ENCODE measurements at regions of chr1 and their contacts with region 1.

Region 1: DNA sequence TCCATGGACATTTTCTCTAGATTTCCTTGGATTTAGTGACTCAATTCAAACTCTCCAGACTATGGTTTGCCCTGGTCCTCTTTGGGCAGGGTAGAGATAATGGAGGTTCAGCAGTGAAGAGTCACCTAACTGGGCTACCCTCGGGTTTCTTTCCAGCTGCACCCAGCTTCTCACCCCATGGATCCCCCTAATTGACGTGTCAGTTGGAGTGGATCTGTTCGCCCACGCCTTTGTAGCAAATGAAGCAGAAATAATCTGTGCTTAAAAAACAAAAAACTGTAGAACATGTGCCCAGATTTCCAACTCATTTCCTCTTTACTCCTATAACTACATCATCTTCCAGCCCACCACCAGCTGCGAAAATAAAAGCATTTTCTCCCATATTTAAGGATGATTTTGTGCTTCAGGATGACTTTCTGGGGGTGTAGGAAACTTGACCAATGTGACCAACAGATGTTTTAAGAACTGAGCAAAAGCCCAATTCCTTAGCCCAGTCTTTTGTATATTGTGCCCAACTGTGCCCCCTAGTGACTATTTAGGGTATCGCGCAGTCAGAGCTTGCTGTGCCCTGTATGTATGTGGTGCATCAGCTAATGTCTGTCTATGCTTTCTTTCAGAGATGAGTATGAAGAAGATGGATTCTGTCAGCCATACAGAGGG is 66.5 kb upstream of the UBE2U start:
- ATAC-seq: peak; percentile 88 to 98 (median 92)
- H3K4me3 ChIP-seq: no peak overlapping the region
- H3K27ac ChIP-seq: no peak overlapping the region
- H3K4me1 ChIP-seq: no peaks in the 10 kb centered on the region

Region 2: GRCh38 chr1:63691701-63692425 is 445.0 kb before region 1 on chr1:
- in situ Hi-C with region 1: loop called in 5 of 9 experiments (anchors 25 kb)
- ATAC-seq: peak; percentile 88 to 97 (median 90)
- H3K4me3 ChIP-seq: no peak overlapping the region
- H3K27ac ChIP-seq: peak overlapping the region in 1 of 2 donors; percentile 38
- H3K4me1 ChIP-seq: peaks cover 0 to 12% of the 10 kb centered on the region in 2 donors

Region 3: DNA sequence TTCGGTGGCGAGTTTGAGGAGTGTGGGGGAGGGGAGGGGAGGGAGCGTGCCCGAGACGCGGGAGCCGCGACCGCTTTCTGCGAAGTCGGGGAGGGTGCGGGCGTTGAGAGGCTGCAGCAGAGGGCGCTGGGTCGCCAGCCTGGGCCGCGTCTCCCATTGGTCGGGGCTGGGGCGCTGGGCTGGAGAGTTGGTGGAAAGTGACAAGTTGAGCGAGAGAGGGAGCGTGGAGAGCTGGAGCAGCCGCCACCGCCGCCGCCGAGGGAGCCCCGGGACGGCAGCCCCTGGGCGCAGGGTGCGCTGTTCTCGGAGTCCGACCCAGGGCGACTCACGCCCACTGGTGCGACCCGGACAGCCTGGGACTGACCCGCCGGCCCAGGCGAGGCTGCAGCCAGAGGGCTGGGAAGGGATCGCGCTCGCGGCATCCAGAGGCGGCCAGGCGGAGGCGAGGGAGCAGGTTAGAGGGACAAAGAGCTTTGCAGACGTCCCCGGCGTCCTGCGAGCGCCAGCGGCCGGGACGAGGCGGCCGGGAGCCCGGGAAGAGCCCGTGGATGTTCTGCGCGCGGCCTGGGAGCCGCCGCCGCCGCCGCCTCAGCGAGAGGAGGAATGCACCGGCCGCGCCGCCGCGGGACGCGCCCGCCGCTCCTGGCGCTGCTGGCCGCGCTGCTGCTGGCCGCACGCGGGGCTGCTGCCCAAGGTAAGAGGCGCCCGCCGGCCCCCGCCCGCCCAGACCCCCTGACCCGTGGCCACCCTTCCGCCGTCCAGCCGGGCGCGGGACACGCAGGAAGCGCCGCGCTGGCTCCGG is 362.9 kb before region 1 on chr1 and contains the start of gene ROR1:
- in situ Hi-C with region 1: loop called in 2 of 9 experiments (anchors 10 to 25 kb)
- ATAC-seq: peak; percentile 89 to 98 (median 98)
- H3K4me3 ChIP-seq: peak within 1 kb of the TSS; percentile 45 to 73 (median 53)
- H3K27ac ChIP-seq: no peak within 1 kb of the TSS
- H3K4me1 ChIP-seq: no peaks in the 10 kb centered on the region
- total RNA-seq, gene ROR1: 1.2 to 15.7 (median 2.7) TPM

Region 4: DNA sequence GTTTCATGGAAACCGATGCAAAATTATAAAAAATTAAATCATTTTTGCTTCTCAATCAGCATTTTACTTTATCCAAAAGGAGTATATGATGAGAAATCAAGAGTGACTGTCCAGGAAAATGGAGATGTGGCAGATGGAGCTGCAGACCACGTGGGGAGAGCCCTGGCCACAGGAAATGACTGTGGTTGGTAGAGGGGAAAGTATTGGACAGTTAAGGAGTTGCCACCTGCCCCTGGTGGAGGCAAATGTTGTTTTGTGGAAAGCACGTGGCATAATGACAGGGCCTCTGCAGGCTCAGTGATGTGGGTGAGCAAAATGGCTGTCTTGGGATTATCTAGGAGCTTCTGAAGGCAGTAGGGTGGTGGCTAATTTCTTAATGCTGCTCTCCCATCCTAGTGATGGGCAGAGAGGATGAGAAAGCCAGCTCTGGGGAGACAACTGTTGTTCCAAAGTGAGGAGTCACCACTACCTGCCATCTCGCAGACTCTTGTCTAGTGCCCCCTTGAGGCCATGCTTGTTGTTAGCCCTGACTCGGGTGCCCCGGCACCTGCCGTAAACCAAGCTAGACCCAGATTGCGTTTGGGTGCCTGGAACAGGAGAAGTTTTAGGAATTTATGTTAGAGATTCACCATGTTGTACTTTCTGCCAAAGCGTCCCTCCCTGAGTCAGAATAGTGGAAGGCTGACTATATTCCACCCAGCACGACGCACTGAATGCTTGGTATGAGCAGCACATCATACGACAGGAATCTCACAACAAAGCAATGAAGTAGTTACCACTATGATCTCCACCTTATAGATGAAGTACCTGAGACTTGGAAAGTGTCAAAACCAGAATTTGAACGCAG is 219.1 kb before region 1 on chr1:
- in situ Hi-C with region 1: loop called in 1 of 9 experiments (anchors 25 kb)
- ATAC-seq: peak in 1 of 8 experiments; percentile 30
- H3K4me3 ChIP-seq: no peak overlapping the region
- H3K27ac ChIP-seq: no peak overlapping the region
- H3K4me1 ChIP-seq: peaks cover 8 to 16% of the 10 kb centered on the region in 2 donors

Region 5: GRCh38 chr1:63935143-63935542 is 201.7 kb before region 1 on chr1:
- in situ Hi-C with region 1: loop called in 1 of 9 experiments (anchors 25 kb)
- ATAC-seq: peak in 3 of 8 experiments; percentile 30 to 50 (median 31)
- H3K4me3 ChIP-seq: no peak overlapping the region
- H3K27ac ChIP-seq: no peak overlapping the region
- H3K4me1 ChIP-seq: no peaks in the 10 kb centered on the region